B cell (primary cell): ENCODE measurements at regions of chr2 and their contacts with region 1.

Region 1: GRCh38 chr2:61434314-61434713 is 36.6 kb downstream of the USP34 start:
- DNase-seq: peak; percentile 44
- ATAC-seq: peak; percentile 62
- H3K4me3 ChIP-seq: no peak overlapping the region
- H3K4me3 Mint-ChIP-seq: peak overlapping the region; percentile 6
- H3K27ac ChIP-seq: peak overlapping the region; percentile 32 to 59
- H3K27ac Mint-ChIP-seq: peak overlapping the region; percentile 64
- H3K4me1 ChIP-seq: peaks cover 28 to 36% of the 10 kb centered on the region in 2 donors
- H3K4me1 Mint-ChIP-seq: peaks cover 61% of the 10 kb centered on the region
- H3K27me3 ChIP-seq: no peaks in the 10 kb centered on the region
- H3K27me3 Mint-ChIP-seq: no peaks in the 10 kb centered on the region
- CTCF ChIP-seq: no peak

Region 2: GRCh38 chr2:61368687-61369665 is 65.3 kb before region 1 on chr2:
- CTCF ChIA-PET with region 1: no interaction called
- POLR2A ChIA-PET with region 1: no interaction called
- intact Hi-C with region 1: no loop called
- DNase-seq: peak; percentile 13
- ATAC-seq: no peak
- H3K4me3 ChIP-seq: no peak overlapping the region
- H3K4me3 Mint-ChIP-seq: no peak overlapping the region
- H3K27ac ChIP-seq: no peak overlapping the region
- H3K27ac Mint-ChIP-seq: no peak overlapping the region
- H3K4me1 ChIP-seq: peaks cover 4% of the 10 kb centered on the region in 2 donors
- H3K4me1 Mint-ChIP-seq: peaks cover 26% of the 10 kb centered on the region
- H3K27me3 ChIP-seq: no peaks in the 10 kb centered on the region
- H3K27me3 Mint-ChIP-seq: no peaks in the 10 kb centered on the region
- CTCF ChIP-seq: peak; percentile 11

Region 3: GRCh38 chr2:61450144-61450543 is 15.8 kb after region 1 on chr2:
- CTCF ChIA-PET with region 1: interaction called, 5 read pairs
- POLR2A ChIA-PET with region 1: interaction called, 14 read pairs
- intact Hi-C with region 1: loop called (anchors 2 kb)
- DNase-seq: peak; percentile 37
- ATAC-seq: peak; percentile 45
- H3K4me3 ChIP-seq: no peak overlapping the region
- H3K4me3 Mint-ChIP-seq: peak overlapping the region; percentile 13
- H3K27ac ChIP-seq: no peak overlapping the region
- H3K27ac Mint-ChIP-seq: no peak overlapping the region
- H3K4me1 ChIP-seq: peaks cover 24 to 27% of the 10 kb centered on the region in 2 donors
- H3K4me1 Mint-ChIP-seq: peaks cover 48% of the 10 kb centered on the region
- H3K27me3 ChIP-seq: no peaks in the 10 kb centered on the region
- H3K27me3 Mint-ChIP-seq: no peaks in the 10 kb centered on the region
- CTCF ChIP-seq: no peak

Region 4: DNA sequence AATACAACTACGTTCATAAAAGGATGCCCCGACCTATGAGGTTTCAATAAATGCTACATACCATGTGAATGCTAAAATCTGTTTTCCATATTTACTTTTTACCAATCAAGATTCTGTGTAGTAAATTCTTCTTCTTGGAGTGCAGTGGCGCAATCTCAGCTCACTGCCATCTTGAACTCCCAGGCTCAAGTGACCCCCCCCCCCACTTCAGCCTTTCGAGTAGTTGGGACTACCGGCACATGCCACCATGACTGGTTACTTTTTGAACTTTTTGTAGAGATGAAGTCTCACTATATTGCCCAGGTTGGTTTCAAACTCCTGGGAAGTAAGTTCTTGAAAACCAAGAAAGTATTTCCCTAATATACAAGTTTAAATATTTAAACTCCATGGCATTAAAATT is 51.0 kb after region 1 on chr2:
- CTCF ChIA-PET with region 1: no interaction called
- POLR2A ChIA-PET with region 1: no interaction called
- intact Hi-C with region 1: no loop called
- DNase-seq: no peak
- ATAC-seq: no peak
- H3K4me3 ChIP-seq: no peak overlapping the region
- H3K4me3 Mint-ChIP-seq: no peak overlapping the region
- H3K27ac ChIP-seq: no peak overlapping the region
- H3K27ac Mint-ChIP-seq: no peak overlapping the region
- H3K4me1 ChIP-seq: no peaks in the 10 kb centered on the region
- H3K4me1 Mint-ChIP-seq: no peaks in the 10 kb centered on the region
- H3K27me3 ChIP-seq: no peaks in the 10 kb centered on the region
- H3K27me3 Mint-ChIP-seq: no peaks in the 10 kb centered on the region
- CTCF ChIP-seq: no peak